HEK293T (cell line): ENCODE measurements at regions of chr12 and their contacts with region 1.

Region 1: DNA sequence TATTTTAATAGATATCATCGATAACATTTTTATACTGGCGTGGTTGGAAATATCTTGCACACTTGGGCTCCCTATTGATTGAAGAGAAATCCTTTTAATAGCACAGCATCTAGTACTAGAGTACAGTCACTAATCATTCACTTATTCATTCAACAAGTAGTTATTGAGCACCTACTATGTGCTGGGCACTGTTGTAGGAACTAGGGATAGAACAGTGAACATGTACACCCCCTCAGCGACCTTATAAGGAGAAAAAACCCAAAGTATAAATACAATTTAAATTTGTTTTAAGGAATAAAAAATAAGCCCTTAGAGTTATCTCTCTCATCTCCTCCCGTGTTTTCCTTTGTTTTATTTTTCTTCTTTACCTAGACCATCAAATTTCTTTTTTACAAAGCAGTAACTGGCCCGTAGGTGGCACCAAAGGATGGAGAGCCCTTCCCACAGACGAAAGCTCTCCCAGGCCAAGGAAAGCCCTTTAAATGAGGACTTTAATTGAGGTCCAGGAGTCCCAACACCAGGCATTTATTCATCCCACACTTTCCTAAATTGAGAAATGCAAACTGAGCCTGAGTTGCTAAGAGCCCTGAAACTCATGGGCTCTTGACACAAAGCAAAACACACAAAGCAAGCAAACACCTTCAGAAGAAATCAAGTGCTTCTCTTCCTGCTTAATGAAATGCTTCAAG is 29.0 kb downstream of the PEBP1 start:
- DNase-seq: peak; percentile 50

Region 2: GRCh38 chr12:118418385-118419057 is 253.6 kb after region 1 on chr12:
- CTCF ChIA-PET with region 1: interaction called, 11 read pairs
- POLR2A ChIA-PET with region 1: no interaction called
- DNase-seq: no peak

Region 3: DNA sequence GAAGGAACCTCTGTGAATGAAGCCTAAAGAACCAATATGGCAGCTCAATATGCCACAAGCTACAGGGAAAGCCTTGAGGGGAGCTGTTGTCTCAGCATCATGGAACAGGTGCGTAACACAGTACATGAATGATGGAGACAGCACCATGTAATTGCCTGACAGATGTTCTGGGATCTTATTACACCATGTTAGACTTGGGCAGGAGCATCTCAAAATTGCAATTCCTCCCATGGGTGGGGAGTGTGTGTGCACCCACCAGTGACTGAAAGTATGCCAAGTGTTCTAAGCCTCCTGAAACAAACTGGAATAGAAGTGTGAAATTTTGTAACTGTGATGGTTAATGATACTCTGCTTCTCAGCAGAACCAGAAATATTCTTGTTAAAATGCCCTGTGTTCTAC is 665.4 kb after region 1 on chr12:
- CTCF ChIA-PET with region 1: no interaction called
- POLR2A ChIA-PET with region 1: no interaction called
- DNase-seq: no peak